ENCODE measurements at regions of chr19 and their contacts with region 1.

Region 1: GRCh38 chr19:48646001-48646721 is at the start of gene CA11:
- DNase-seq: peak; percentile 91 to 96 (median 94)
- H3K4me3 ChIP-seq: peak within 1 kb of the TSS; percentile 85 to 87
- H3K4me3 Mint-ChIP-seq: peak within 1 kb of the TSS; percentile 86 to 98 (median 93)
- H3K27ac ChIP-seq: peak within 1 kb of the TSS; percentile 77
- H3K27ac Mint-ChIP-seq: peak within 1 kb of the TSS; percentile 83 to 97 (median 96)
- H3K4me1 ChIP-seq: peaks cover 46% of the 10 kb centered on the region
- H3K4me1 Mint-ChIP-seq: peaks cover 23 to 55% (median 41%) of the 10 kb centered on the region in 4 donors
- H3K27me3 ChIP-seq: no peaks in the 10 kb centered on the region
- H3K27me3 Mint-ChIP-seq: no peaks in the 10 kb centered on the region
- total RNA-seq, gene CA11: 13.7 to 15.4 TPM

Region 2: DNA sequence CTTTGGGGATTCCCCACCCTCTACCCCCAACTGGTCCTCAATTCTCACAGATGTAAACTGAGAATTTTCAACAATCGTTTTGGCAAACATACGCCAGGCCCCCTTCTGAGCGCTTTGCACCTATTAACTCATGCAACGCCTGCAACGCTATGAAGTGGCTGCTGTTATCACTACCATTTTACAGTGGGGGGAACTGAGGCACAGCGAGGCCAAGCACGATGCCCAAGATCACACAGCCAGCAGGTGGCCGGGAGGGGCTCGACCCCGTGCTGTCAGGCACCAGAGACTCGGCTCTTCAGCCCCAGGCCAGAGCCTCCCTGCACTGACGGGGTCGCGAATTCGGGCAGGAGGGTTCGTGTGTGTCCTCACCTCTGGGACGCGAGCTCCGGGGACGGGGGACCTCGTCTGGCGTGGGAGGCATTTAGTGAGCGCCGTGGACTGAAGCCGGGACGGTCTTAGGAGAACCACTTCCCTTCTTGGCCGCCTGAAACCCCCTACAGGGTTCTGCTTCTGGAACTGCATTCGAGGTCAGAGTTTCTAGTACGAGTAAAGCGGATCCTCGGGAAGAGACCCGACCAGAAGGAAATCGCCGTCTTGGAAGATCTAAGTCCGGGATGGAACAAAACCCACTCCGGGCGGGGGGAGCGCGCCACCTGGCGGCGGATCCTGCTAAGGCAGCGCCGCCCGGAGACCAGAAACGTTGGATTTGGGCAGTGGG is 355.2 kb before region 1 on chr19:
- CTCF ChIA-PET with region 1: no interaction called
- POLR2A ChIA-PET with region 1: no interaction called
- intact Hi-C with region 1: no loop called
- DNase-seq: peak; percentile 46 to 65 (median 48)
- H3K4me3 ChIP-seq: peak overlapping the region; percentile 29 to 58
- H3K4me3 Mint-ChIP-seq: peak overlapping the region; percentile 77 to 86 (median 81)
- H3K27ac ChIP-seq: no peak overlapping the region
- H3K27ac Mint-ChIP-seq: peak overlapping the region in 2 of 7 donors; percentile 27 to 68
- H3K4me1 ChIP-seq: peaks cover 8% of the 10 kb centered on the region
- H3K4me1 Mint-ChIP-seq: peaks cover 0 to 8% (median 3%) of the 10 kb centered on the region in 4 donors
- H3K27me3 ChIP-seq: no peaks in the 10 kb centered on the region
- H3K27me3 Mint-ChIP-seq: peaks cover 3 to 13% of the 10 kb centered on the region in 2 donors

Region 3: GRCh38 chr19:48618916-48619691 is 27.1 kb before region 1 on chr19 and contains the starts of genes RPL18 and SPHK2:
- CTCF ChIA-PET with region 1: interaction called, 7 read pairs
- POLR2A ChIA-PET with region 1: interaction called, 46 read pairs
- intact Hi-C with region 1: loop called (anchors 1 kb)
- DNase-seq: peak; percentile 94 to 97 (median 96)
- H3K4me3 ChIP-seq: peak within 1 kb of the TSS; percentile 76 to 81
- H3K4me3 Mint-ChIP-seq: peak within 1 kb of the TSS; percentile 95 to 98 (median 96)
- H3K27ac ChIP-seq: peak within 1 kb of the TSS; percentile 88
- H3K27ac Mint-ChIP-seq: peak within 1 kb of the TSS; percentile 97 to 99 (median 98)
- H3K4me1 ChIP-seq: peaks cover 50% of the 10 kb centered on the region
- H3K4me1 Mint-ChIP-seq: peaks cover 27 to 74% (median 49%) of the 10 kb centered on the region in 4 donors
- H3K27me3 ChIP-seq: no peaks in the 10 kb centered on the region
- H3K27me3 Mint-ChIP-seq: no peaks in the 10 kb centered on the region
- total RNA-seq, gene RPL18: 2,357 to 2,448 TPM
- total RNA-seq, gene SPHK2: 25.0 to 29.1 TPM

Region 4: GRCh38 chr19:48630296-48631063 is 15.7 kb before region 1 on chr19:
- CTCF ChIA-PET with region 1: interaction called, 16 read pairs
- POLR2A ChIA-PET with region 1: interaction called, 76 read pairs
- intact Hi-C with region 1: no loop called
- DNase-seq: peak in 1 of 5 donors; percentile 5
- H3K4me3 ChIP-seq: no peak overlapping the region
- H3K4me3 Mint-ChIP-seq: no peak overlapping the region
- H3K27ac ChIP-seq: no peak overlapping the region
- H3K27ac Mint-ChIP-seq: peak overlapping the region in 3 of 7 donors; percentile 12 to 72 (median 59)
- H3K4me1 ChIP-seq: peaks cover 28% of the 10 kb centered on the region
- H3K4me1 Mint-ChIP-seq: peaks cover 4 to 45% (median 18%) of the 10 kb centered on the region in 4 donors
- H3K27me3 ChIP-seq: no peaks in the 10 kb centered on the region
- H3K27me3 Mint-ChIP-seq: no peaks in the 10 kb centered on the region

Region 5: GRCh38 chr19:48674921-48675824 is 29.0 kb after region 1 on chr19:
- CTCF ChIA-PET with region 1: interaction called, 34 read pairs
- POLR2A ChIA-PET with region 1: interaction called, 25 read pairs
- intact Hi-C with region 1: loop called (anchors 1 kb)
- DNase-seq: peak; percentile 72 to 80 (median 75)
- H3K4me3 ChIP-seq: no peak overlapping the region
- H3K4me3 Mint-ChIP-seq: peak overlapping the region in 1 of 8 donors; percentile 2
- H3K27ac ChIP-seq: no peak overlapping the region
- H3K27ac Mint-ChIP-seq: peak overlapping the region in 3 of 7 donors; percentile 23 to 86 (median 64)
- H3K4me1 ChIP-seq: peaks cover 9% of the 10 kb centered on the region
- H3K4me1 Mint-ChIP-seq: peaks cover 5 to 8% (median 6%) of the 10 kb centered on the region in 4 donors
- H3K27me3 ChIP-seq: no peaks in the 10 kb centered on the region
- H3K27me3 Mint-ChIP-seq: no peaks in the 10 kb centered on the region

Region 6: GRCh38 chr19:48720613-48721296 is 74.6 kb after region 1 on chr19:
- CTCF ChIA-PET with region 1: interaction called, 5 read pairs
- POLR2A ChIA-PET with region 1: interaction called, 13 read pairs
- intact Hi-C with region 1: no loop called
- DNase-seq: peak; percentile 91 to 97 (median 92)
- H3K4me3 ChIP-seq: peak overlapping the region; percentile 50 to 75
- H3K4me3 Mint-ChIP-seq: peak overlapping the region; percentile 94 to 99 (median 98)
- H3K27ac ChIP-seq: peak overlapping the region; percentile 72
- H3K27ac Mint-ChIP-seq: peak overlapping the region; percentile 94 to 100 (median 99)
- H3K4me1 ChIP-seq: peaks cover 19% of the 10 kb centered on the region
- H3K4me1 Mint-ChIP-seq: peaks cover 15 to 34% (median 25%) of the 10 kb centered on the region in 4 donors
- H3K27me3 ChIP-seq: no peaks in the 10 kb centered on the region
- H3K27me3 Mint-ChIP-seq: no peaks in the 10 kb centered on the region

Region 7: GRCh38 chr19:48795055-48795684 is 149.0 kb after region 1 on chr19:
- CTCF ChIA-PET with region 1: interaction called, 3 read pairs
- POLR2A ChIA-PET with region 1: interaction called, 10 read pairs
- intact Hi-C with region 1: loop called (anchors 2 kb)
- DNase-seq: peak; percentile 86 to 87 (median 86)
- H3K4me3 ChIP-seq: peak overlapping the region; percentile 48 to 78
- H3K4me3 Mint-ChIP-seq: peak overlapping the region; percentile 94 to 98 (median 95)
- H3K27ac ChIP-seq: peak overlapping the region; percentile 70
- H3K27ac Mint-ChIP-seq: peak overlapping the region; percentile 64 to 97 (median 96)
- H3K4me1 ChIP-seq: peaks cover 5% of the 10 kb centered on the region
- H3K4me1 Mint-ChIP-seq: peaks cover 4 to 16% (median 6%) of the 10 kb centered on the region in 4 donors
- H3K27me3 ChIP-seq: no peaks in the 10 kb centered on the region
- H3K27me3 Mint-ChIP-seq: no peaks in the 10 kb centered on the region

Region 8: GRCh38 chr19:48806518-48806817 is 160.3 kb after region 1 on chr19:
- CTCF ChIA-PET with region 1: no interaction called
- POLR2A ChIA-PET with region 1: no interaction called
- intact Hi-C with region 1: no loop called
- DNase-seq: peak in 4 of 5 donors; percentile 42 to 60 (median 54)
- H3K4me3 ChIP-seq: no peak overlapping the region
- H3K4me3 Mint-ChIP-seq: peak overlapping the region in 2 of 8 donors; percentile 59 to 75
- H3K27ac ChIP-seq: no peak overlapping the region
- H3K27ac Mint-ChIP-seq: peak overlapping the region in 3 of 7 donors; percentile 64 to 78 (median 74)
- H3K4me1 ChIP-seq: peaks cover 13% of the 10 kb centered on the region
- H3K4me1 Mint-ChIP-seq: peaks cover 13 to 34% (median 23%) of the 10 kb centered on the region in 4 donors
- H3K27me3 ChIP-seq: no peaks in the 10 kb centered on the region
- H3K27me3 Mint-ChIP-seq: no peaks in the 10 kb centered on the region

Region 9: GRCh38 chr19:48842789-48843162 is 196.6 kb after region 1 on chr19:
- CTCF ChIA-PET with region 1: interaction called, 19 read pairs
- POLR2A ChIA-PET with region 1: interaction called, 3 read pairs
- intact Hi-C with region 1: loop called (anchors 1 kb)
- DNase-seq: peak; percentile 42 to 60 (median 55)
- H3K4me3 ChIP-seq: no peak overlapping the region
- H3K4me3 Mint-ChIP-seq: peak overlapping the region in 1 of 8 donors; percentile 33
- H3K27ac ChIP-seq: no peak overlapping the region
- H3K27ac Mint-ChIP-seq: no peak overlapping the region
- H3K4me1 ChIP-seq: no peaks in the 10 kb centered on the region
- H3K4me1 Mint-ChIP-seq: peaks cover 0 to 4% (median 2%) of the 10 kb centered on the region in 4 donors
- H3K27me3 ChIP-seq: no peaks in the 10 kb centered on the region
- H3K27me3 Mint-ChIP-seq: no peaks in the 10 kb centered on the region